Caco-2 (cell line): ENCODE measurements at regions of chr5 and their contacts with region 1.

Region 1: DNA sequence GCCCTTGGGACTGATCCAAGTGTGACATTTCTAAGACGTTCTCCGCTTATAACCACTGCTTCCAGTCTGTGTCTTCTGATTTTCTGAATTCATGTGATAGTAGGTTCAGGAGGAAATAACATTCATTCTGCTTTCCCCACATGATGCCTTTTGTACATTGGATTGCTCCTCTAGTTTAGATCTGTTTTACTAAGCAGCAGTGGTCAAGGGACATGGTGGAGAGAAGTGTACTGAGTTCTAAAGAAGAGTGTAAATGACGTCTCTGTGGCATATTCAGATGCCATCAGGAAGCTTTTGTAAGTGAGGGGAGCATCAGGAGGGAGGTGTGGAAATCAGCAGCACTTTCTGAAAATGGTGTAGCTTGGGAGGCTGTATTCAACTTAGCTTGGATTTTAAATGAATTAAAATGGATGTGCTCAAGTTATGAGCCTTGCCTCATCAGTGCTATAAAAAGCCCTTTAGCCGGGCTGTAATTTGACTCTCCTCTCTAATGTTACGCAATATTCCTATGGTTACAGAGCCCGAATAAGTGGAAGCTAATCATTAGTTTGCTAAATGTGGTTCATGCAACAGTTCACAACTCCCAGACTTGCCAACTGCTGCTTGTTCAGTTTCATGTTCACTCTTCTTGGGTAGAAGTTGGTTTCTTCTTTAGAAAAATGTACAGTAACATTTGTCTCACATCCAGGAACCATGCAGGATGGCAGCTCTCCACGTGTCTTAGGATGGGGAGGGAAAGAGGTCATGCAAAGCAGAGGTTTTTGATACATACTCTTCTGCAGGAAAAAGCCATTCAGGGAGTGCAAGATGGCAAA is 281.3 kb downstream of the ARHGAP26 start:
- DNase-seq: peak in 1 of 2 experiments; percentile 6
- H3K4me3 ChIP-seq: no peak overlapping the region
- H3K4me3 Mint-ChIP-seq: no peak overlapping the region
- H3K27ac Mint-ChIP-seq: peak overlapping the region; percentile 7
- H3K4me1 ChIP-seq: 0 out of 2 replicates have a peak, but pooled peaks cover 8% of the 10 kb centered on the region
- H3K4me1 Mint-ChIP-seq: peaks cover 10% of the 10 kb centered on the region
- H3K27me3 ChIP-seq: no peaks in the 10 kb centered on the region
- H3K27me3 Mint-ChIP-seq: no peaks in the 10 kb centered on the region
- CTCF ChIP-seq: no peak

Region 2: GRCh38 chr5:142922223-142922952 is 129.1 kb before region 1 on chr5:
- CTCF ChIA-PET with region 1: no interaction called
- POLR2A ChIA-PET with region 1: no interaction called
- intact Hi-C with region 1: loop called (anchors 5 kb)
- DNase-seq: peak in 1 of 2 experiments; percentile 19
- H3K4me3 ChIP-seq: no peak overlapping the region
- H3K4me3 Mint-ChIP-seq: no peak overlapping the region
- H3K27ac Mint-ChIP-seq: no peak overlapping the region
- H3K4me1 ChIP-seq: peaks cover 21% of the 10 kb centered on the region
- H3K4me1 Mint-ChIP-seq: peaks cover 27% of the 10 kb centered on the region
- H3K27me3 ChIP-seq: no peaks in the 10 kb centered on the region
- H3K27me3 Mint-ChIP-seq: no peaks in the 10 kb centered on the region
- CTCF ChIP-seq: peak; percentile 42 to 47

Region 3: GRCh38 chr5:143153332-143154119 is 102.1 kb after region 1 on chr5:
- CTCF ChIA-PET with region 1: no interaction called
- POLR2A ChIA-PET with region 1: no interaction called
- intact Hi-C with region 1: no loop called
- DNase-seq: no peak
- H3K4me3 ChIP-seq: no peak overlapping the region
- H3K4me3 Mint-ChIP-seq: no peak overlapping the region
- H3K27ac Mint-ChIP-seq: no peak overlapping the region
- H3K4me1 ChIP-seq: no peaks in the 10 kb centered on the region
- H3K4me1 Mint-ChIP-seq: no peaks in the 10 kb centered on the region
- H3K27me3 ChIP-seq: no peaks in the 10 kb centered on the region
- H3K27me3 Mint-ChIP-seq: no peaks in the 10 kb centered on the region
- CTCF ChIP-seq: no peak

Region 4: DNA sequence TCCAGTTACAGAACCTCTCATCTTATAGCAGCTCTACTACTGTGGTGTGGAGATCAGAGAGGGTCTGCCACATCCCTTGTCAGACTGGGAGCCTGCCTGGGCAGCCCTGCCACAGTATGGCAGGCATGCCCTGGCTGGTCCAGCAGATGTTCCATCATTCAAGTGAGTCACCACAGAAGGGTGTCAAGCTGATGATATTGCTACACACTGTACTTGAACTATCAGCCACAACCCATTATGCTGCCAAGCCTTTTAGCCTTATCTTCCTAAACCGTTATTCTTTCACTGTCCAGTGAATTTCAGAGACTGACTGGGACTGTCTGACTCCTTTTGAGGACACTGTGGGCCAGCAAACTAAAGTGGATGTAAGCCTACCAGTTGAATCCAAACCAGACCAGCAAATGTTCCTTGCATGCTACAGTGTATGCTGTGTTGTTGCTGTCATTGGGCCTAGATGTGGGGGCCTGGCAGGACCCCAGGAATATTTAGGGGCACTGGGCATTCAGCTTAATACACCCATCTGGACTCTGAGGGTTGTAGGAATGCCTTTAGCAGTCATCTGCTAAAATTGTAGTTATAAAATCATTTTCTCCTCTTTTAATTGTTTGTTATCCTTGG is 149.4 kb after region 1 on chr5:
- CTCF ChIA-PET with region 1: no interaction called
- POLR2A ChIA-PET with region 1: no interaction called
- intact Hi-C with region 1: no loop called
- DNase-seq: no peak
- H3K4me3 ChIP-seq: no peak overlapping the region
- H3K4me3 Mint-ChIP-seq: no peak overlapping the region
- H3K27ac Mint-ChIP-seq: no peak overlapping the region
- H3K4me1 ChIP-seq: no peaks in the 10 kb centered on the region
- H3K4me1 Mint-ChIP-seq: no peaks in the 10 kb centered on the region
- H3K27me3 ChIP-seq: no peaks in the 10 kb centered on the region
- H3K27me3 Mint-ChIP-seq: no peaks in the 10 kb centered on the region
- CTCF ChIP-seq: no peak

Region 5: GRCh38 chr5:143850050-143850683 is 798.7 kb after region 1 on chr5:
- CTCF ChIA-PET with region 1: no interaction called
- POLR2A ChIA-PET with region 1: no interaction called
- intact Hi-C with region 1: no loop called
- DNase-seq: no peak
- H3K4me3 ChIP-seq: no peak overlapping the region
- H3K4me3 Mint-ChIP-seq: no peak overlapping the region
- H3K27ac Mint-ChIP-seq: no peak overlapping the region
- H3K4me1 ChIP-seq: no peaks in the 10 kb centered on the region
- H3K4me1 Mint-ChIP-seq: no peaks in the 10 kb centered on the region
- H3K27me3 ChIP-seq: no peaks in the 10 kb centered on the region
- H3K27me3 Mint-ChIP-seq: peaks cover 3% of the 10 kb centered on the region
- CTCF ChIP-seq: no peak